ENCODE measurements at regions of chr16 and their contacts with region 1.

Region 1: GRCh38 chr16:20849587-20850390 is 43.5 kb downstream of the REXO5 start:
- DNase-seq: no peak
- ATAC-seq: peak; percentile 65
- H3K4me3 ChIP-seq: no peak overlapping the region
- H3K27ac ChIP-seq: no peak overlapping the region
- H3K4me1 ChIP-seq: no peaks in the 10 kb centered on the region
- H3K27me3 ChIP-seq: no peaks in the 10 kb centered on the region
- CTCF ChIP-seq: peak; percentile 98 to 99 (median 98)
- EP300 ChIP-seq: no peak
- POLR2A ChIP-seq: no peak
- RAD21 ChIP-seq: peak; percentile 100

Region 2: GRCh38 chr16:20774703-20775362 is 75.0 kb before region 1 on chr16:
- CTCF ChIA-PET with region 1: interaction called, 8 read pairs
- POLR2A ChIA-PET with region 1: no interaction called
- RAD21 ChIA-PET with region 1: interaction called, 3 read pairs
- SMC1A ChIA-PET with region 1: interaction called, 10 read pairs
- in situ Hi-C with region 1: no loop called
- intact Hi-C with region 1: no loop called
- DNase-seq: peak; percentile 9
- ATAC-seq: peak; percentile 100
- H3K4me3 ChIP-seq: no peak overlapping the region
- H3K27ac ChIP-seq: no peak overlapping the region
- H3K4me1 ChIP-seq: no peaks in the 10 kb centered on the region
- H3K27me3 ChIP-seq: no peaks in the 10 kb centered on the region
- CTCF ChIP-seq: peak; percentile 82 to 92 (median 92)
- EP300 ChIP-seq: no peak
- POLR2A ChIP-seq: no peak
- RAD21 ChIP-seq: peak; percentile 54

Region 3: DNA sequence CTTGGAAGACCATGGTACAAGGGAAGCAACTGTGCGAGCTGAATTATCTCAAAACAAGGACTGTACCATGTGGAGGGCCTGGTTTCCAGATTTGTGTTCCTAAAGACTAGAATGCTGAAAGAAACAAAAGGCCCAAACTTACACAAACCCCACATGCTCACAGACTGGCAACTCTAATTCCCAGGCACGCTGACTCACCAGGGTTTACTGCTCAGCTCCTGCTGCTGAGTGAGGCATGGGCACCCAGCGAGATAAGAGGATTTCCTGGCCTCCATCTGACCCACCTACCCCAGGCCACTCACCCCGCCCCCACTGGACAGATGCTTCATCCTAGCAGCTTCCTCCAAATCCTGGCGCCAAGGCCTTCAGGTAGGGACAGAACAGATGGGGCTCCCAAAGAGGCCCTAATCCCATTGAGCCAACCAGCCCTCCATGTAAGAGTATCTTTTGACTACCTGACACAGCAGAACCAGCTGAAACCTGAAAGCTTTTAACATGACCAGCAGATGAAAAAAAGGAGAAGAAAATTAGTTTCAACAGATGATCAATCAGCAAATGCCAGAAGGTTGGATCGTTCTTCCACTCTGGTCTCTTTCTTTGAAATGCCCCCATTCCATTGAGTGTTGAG is 16.5 kb after region 1 on chr16:
- CTCF ChIA-PET with region 1: interaction called, 40 read pairs
- POLR2A ChIA-PET with region 1: no interaction called
- RAD21 ChIA-PET with region 1: interaction called, 11 read pairs
- SMC1A ChIA-PET with region 1: interaction called, 50 read pairs
- in situ Hi-C with region 1: no loop called
- intact Hi-C with region 1: no loop called
- DNase-seq: no peak
- ATAC-seq: peak; percentile 44
- H3K4me3 ChIP-seq: no peak overlapping the region
- H3K27ac ChIP-seq: peak overlapping the region; percentile 98
- H3K4me1 ChIP-seq: peaks cover 28% of the 10 kb centered on the region
- H3K27me3 ChIP-seq: no peaks in the 10 kb centered on the region
- CTCF ChIP-seq: no peak
- EP300 ChIP-seq: peak in 1 of 2 experiments; percentile 8; a peak in 1 of 4 replicates
- POLR2A ChIP-seq: no peak
- RAD21 ChIP-seq: no peak

Region 4: DNA sequence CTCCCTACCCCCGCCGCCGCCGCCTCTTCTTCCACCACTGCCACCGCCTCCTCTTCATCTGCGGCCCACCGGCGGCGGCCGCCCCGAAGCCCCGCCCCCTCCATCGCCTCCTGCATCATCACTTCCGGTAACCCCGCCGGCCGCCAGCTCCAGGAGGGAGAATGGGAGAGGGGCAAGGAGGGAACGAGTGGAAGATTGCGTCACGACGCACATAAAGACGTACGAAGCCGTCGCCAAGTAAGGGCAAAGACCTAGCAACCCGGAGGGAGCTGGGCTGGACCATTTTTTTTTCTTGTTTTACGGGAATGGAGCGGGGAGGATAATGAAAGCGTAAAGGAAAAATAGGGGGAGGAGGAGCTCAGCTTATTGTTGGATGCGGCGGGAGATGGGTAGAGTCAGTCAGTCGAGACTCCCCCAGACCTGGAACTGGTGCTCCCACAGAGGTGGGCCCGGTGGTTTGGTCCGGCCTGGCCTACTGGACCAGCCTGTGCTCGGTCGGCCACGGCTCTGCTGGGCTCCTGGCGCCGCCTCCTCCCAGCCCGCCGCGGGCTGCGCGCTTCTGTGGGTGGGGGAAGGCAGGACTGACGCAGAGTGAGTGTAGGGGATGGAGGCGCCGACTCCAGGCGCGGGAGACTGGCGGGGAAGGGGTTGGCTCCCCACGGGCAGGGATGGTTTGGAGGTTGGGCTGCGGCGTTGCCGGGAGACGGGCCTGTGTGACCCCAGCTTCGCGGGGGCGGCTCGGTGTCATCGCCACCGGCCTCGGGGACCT is 50.7 kb after region 1 on chr16 and contains the starts of genes DCUN1D3 and LYRM1:
- CTCF ChIA-PET with region 1: interaction called, 12 read pairs
- POLR2A ChIA-PET with region 1: no interaction called
- RAD21 ChIA-PET with region 1: interaction called, 12 read pairs
- SMC1A ChIA-PET with region 1: interaction called, 20 read pairs
- in situ Hi-C with region 1: no loop called
- intact Hi-C with region 1: no loop called
- DNase-seq: peak; percentile 87
- ATAC-seq: peak; percentile 89
- H3K4me3 ChIP-seq: peak within 1 kb of the TSS; percentile 82
- H3K27ac ChIP-seq: peak within 1 kb of the TSS; percentile 96
- H3K4me1 ChIP-seq: peaks cover 22% of the 10 kb centered on the region
- H3K27me3 ChIP-seq: no peaks in the 10 kb centered on the region
- CTCF ChIP-seq: no peak
- EP300 ChIP-seq: 0 out of 4 replicates have a peak, but pooled peaks of 1 of the 2 experiments have one; percentile 24
- POLR2A ChIP-seq: peak; percentile 88
- RAD21 ChIP-seq: no peak
- polyA plus RNA-seq, gene DCUN1D3: 0.47 to 1.2 TPM
- polyA plus RNA-seq, gene LYRM1: 36.9 to 43.7 TPM

Region 5: GRCh38 chr16:20944861-20945574 is 95.2 kb after region 1 on chr16:
- CTCF ChIA-PET with region 1: interaction called, 47 read pairs
- POLR2A ChIA-PET with region 1: no interaction called
- RAD21 ChIA-PET with region 1: interaction called, 14 read pairs
- SMC1A ChIA-PET with region 1: interaction called, 20 read pairs
- in situ Hi-C with region 1: no loop called
- intact Hi-C with region 1: loop called (anchors 10 kb)
- DNase-seq: no peak
- ATAC-seq: peak; percentile 72
- H3K4me3 ChIP-seq: no peak overlapping the region
- H3K27ac ChIP-seq: no peak overlapping the region
- H3K4me1 ChIP-seq: peaks cover 17% of the 10 kb centered on the region
- H3K27me3 ChIP-seq: no peaks in the 10 kb centered on the region; a peak in 2 of 4 replicates
- CTCF ChIP-seq: peak in 2 of 3 experiments; percentile 22 to 33; a peak in 2 of 6 replicates
- EP300 ChIP-seq: no peak
- POLR2A ChIP-seq: no peak
- RAD21 ChIP-seq: peak; percentile 60

Region 6: GRCh38 chr16:21075252-21075651 is 225.5 kb after region 1 on chr16:
- CTCF ChIA-PET with region 1: interaction called, 37 read pairs
- POLR2A ChIA-PET with region 1: no interaction called
- RAD21 ChIA-PET with region 1: interaction called, 13 read pairs
- SMC1A ChIA-PET with region 1: interaction called, 22 read pairs
- in situ Hi-C with region 1: loop called (anchors 5 kb)
- intact Hi-C with region 1: no loop called
- DNase-seq: no peak
- ATAC-seq: no peak
- H3K4me3 ChIP-seq: no peak overlapping the region
- H3K27ac ChIP-seq: no peak overlapping the region
- H3K4me1 ChIP-seq: no peaks in the 10 kb centered on the region
- H3K27me3 ChIP-seq: no peaks in the 10 kb centered on the region
- CTCF ChIP-seq: no peak
- EP300 ChIP-seq: no peak
- POLR2A ChIP-seq: no peak
- RAD21 ChIP-seq: no peak

Region 7: DNA sequence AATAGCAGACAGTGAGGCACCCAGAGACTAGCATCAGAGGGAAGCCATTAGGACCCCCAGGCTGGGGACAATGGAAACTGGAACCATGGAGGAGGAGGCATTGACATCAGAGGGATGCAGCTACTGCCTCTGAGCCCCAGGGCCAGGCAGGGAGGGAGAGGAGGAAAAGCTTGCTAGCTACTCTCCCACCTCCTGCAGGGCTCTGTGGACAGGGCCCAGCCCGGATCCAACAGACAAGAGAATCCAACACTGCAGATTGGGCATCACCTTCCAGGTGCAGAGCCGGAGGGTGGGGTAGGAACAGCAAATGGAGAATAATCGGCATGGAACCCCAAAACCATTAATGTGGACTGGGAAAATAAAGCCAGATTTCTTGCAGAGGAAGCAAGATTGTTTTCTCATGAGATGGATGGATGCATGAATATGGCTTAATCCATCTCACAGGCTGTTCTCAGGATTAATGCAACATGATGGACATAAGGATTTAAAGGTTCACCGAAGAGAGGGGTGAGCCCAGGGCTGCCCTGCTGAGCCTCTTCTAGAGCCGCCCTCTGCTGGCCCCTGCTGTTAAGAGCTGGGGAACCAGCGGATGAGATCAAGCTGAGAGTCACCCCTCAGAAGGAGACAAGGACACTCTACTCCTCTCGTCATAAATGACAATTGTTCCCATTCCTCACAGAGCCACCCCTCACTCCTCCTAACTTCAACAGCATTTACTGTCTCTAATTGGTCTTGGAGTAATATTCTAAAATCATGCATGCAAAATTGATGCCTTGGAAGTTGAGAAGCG is 252.0 kb after region 1 on chr16:
- CTCF ChIA-PET with region 1: interaction called, 8 read pairs
- POLR2A ChIA-PET with region 1: no interaction called
- RAD21 ChIA-PET with region 1: interaction called, 4 read pairs
- SMC1A ChIA-PET with region 1: interaction called, 12 read pairs
- in situ Hi-C with region 1: no loop called
- intact Hi-C with region 1: no loop called
- DNase-seq: no peak
- ATAC-seq: peak; percentile 76
- H3K4me3 ChIP-seq: no peak overlapping the region
- H3K27ac ChIP-seq: no peak overlapping the region
- H3K4me1 ChIP-seq: no peaks in the 10 kb centered on the region
- H3K27me3 ChIP-seq: no peaks in the 10 kb centered on the region; a peak in 1 of 4 replicates
- CTCF ChIP-seq: peak; percentile 40 to 56 (median 44)
- EP300 ChIP-seq: no peak
- POLR2A ChIP-seq: no peak
- RAD21 ChIP-seq: peak; percentile 30; the same call in 1 of the 2 replicates

Measured in GM12878 (cell line).